SK-N-SH (cell line): ENCODE measurements at regions of chr15 and their contacts with region 1.

Region 1: DNA sequence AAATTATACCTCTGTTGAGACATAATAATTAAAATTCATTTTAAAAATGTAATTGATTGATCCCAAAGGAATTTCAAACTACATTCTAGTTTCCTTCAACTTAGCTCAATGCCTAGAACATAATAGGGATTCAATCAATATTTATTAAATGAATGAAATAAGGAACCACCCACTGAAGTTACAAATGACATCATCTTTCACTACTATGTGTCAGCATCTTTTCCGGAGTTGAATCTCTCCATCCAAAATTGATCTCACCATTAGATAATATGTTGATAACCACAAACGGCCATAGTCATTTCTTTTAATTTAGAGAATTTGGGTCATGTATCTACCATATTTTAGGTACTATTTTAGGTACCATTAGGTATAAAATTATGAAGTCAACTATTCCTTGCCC is 403.9 kb upstream of the RORA start:
- DNase-seq: no peak
- H3K4me3 ChIP-seq: no peak overlapping the region
- H3K27ac ChIP-seq: no peak overlapping the region
- H3K4me1 ChIP-seq: no peaks in the 10 kb centered on the region
- H3K27me3 ChIP-seq: no peaks in the 10 kb centered on the region
- CTCF ChIP-seq: no peak
- EP300 ChIP-seq: no peak
- RAD21 ChIP-seq: no peak

Region 2: DNA sequence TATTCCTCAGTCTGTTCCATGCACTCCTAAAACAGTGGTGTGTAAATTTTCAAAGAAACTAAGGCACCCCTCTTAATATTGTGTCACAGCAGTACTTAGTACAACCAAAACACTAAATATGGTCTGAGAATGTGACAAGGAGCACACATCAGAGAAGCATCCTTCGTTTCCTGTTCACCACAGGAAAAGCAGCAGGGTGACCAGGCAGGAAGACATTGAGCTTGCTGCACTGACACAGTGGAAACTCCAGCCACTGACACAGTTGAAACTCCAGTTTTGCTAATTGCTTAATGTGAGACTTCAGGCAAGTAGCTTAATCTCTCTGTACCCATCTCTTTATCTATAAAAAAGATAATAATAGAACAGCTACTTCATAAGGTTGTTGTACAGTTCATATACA is 50.9 kb before region 1 on chr15:
- CTCF ChIA-PET with region 1: no interaction called
- POLR2A ChIA-PET with region 1: no interaction called
- DNase-seq: no peak
- H3K4me3 ChIP-seq: no peak overlapping the region
- H3K27ac ChIP-seq: no peak overlapping the region
- H3K4me1 ChIP-seq: no peaks in the 10 kb centered on the region
- H3K27me3 ChIP-seq: no peaks in the 10 kb centered on the region
- CTCF ChIP-seq: no peak
- EP300 ChIP-seq: no peak
- RAD21 ChIP-seq: no peak

Region 3: GRCh38 chr15:61621146-61621545 is 11.8 kb before region 1 on chr15:
- CTCF ChIA-PET with region 1: interaction called, 13 read pairs
- POLR2A ChIA-PET with region 1: no interaction called
- DNase-seq: peak; percentile 61
- H3K4me3 ChIP-seq: no peak overlapping the region
- H3K27ac ChIP-seq: no peak overlapping the region
- H3K4me1 ChIP-seq: no peaks in the 10 kb centered on the region
- H3K27me3 ChIP-seq: no peaks in the 10 kb centered on the region
- CTCF ChIP-seq: peak; percentile 64
- EP300 ChIP-seq: no peak
- RAD21 ChIP-seq: peak; percentile 87